Activated B cell treated with CpG ODN at 0.5 μM for 24 hours (primary cell): ENCODE measurements at regions of chr1 and their contacts with region 1.

Region 1: GRCh38 chr1:116504308-116505156 is 66.3 kb downstream of the CD58 start:
- DNase-seq: peak; percentile 64
- ATAC-seq: peak; percentile 95
- H3K4me3 Mint-ChIP-seq: peak overlapping the region; percentile 53
- H3K27ac Mint-ChIP-seq: peak overlapping the region; percentile 83
- H3K4me1 Mint-ChIP-seq: peaks cover 63% of the 10 kb centered on the region
- H3K27me3 Mint-ChIP-seq: no peaks in the 10 kb centered on the region
- CTCF ChIP-seq: no peak

Region 2: DNA sequence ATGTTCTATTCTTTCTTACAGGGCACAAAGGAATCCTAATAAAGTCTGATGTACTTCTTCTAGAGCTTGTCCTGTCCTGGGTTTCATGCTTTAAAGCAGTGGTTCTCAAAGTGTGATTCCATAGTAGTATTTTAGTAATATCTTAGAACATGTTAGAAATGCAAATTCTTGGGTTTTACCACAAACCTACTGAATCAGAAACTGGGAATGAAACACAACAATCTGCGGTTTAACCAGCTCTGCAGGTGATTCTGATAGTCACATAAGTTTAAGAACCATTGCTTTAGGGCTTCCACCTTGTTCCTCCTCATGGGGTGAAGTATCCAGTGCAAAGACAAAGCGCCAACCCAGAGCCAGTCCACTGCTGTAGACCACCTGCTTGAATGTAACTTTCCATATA is 1207.6 kb before region 1 on chr1:
- CTCF ChIA-PET with region 1: no interaction called
- POLR2A ChIA-PET with region 1: no interaction called
- intact Hi-C with region 1: no loop called
- DNase-seq: no peak
- ATAC-seq: no peak
- H3K4me3 Mint-ChIP-seq: no peak overlapping the region
- H3K27ac Mint-ChIP-seq: no peak overlapping the region
- H3K4me1 Mint-ChIP-seq: no peaks in the 10 kb centered on the region
- H3K27me3 Mint-ChIP-seq: peaks cover 2% of the 10 kb centered on the region
- CTCF ChIP-seq: no peak

Region 3: DNA sequence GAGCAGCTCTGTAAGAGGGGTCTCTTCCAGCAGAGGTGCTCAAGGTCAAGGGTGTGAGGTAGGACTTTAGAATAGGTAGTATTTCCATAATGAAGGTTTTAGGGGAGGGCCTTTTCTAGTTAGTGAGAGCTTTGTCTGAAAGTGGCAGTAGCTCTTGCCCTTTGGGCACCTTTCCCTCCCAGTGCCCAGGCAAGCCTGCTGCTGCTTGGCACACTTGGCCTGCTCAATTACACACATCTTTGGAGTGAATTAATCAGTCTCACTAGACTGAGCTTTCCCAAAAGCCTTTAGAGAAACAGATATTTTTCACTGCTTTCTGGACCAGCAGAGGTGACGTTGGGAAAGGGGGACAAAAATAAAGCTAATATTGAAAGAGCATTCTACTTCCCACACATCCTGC is 345.4 kb before region 1 on chr1:
- CTCF ChIA-PET with region 1: interaction called, 8 read pairs
- POLR2A ChIA-PET with region 1: interaction called, 11 read pairs
- intact Hi-C with region 1: no loop called
- DNase-seq: no peak
- ATAC-seq: no peak
- H3K4me3 Mint-ChIP-seq: no peak overlapping the region
- H3K27ac Mint-ChIP-seq: no peak overlapping the region
- H3K4me1 Mint-ChIP-seq: no peaks in the 10 kb centered on the region
- H3K27me3 Mint-ChIP-seq: peaks cover 3% of the 10 kb centered on the region
- CTCF ChIP-seq: no peak

Region 4: DNA sequence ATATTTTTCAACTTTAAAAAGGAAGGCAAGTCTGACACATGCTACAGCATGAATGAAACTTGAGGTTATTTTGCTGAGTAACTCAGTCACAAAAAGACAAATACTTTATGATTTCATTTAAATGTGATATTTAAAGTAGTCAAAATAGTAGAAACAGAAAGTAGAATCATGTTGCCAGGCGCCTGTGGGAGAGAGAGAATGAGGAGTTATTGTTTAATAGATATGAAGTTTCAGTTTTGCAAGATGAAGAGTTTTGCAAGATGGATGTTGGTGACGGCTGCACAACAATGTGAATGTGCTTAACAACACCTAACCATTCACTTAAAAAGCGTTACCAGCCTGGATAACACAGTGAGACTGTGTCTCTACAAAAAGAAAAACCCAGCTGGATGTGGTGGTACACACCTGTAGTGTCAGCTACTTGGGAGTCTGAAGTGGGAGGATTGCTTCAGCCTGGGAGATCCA is 152.2 kb before region 1 on chr1:
- CTCF ChIA-PET with region 1: no interaction called
- POLR2A ChIA-PET with region 1: no interaction called
- intact Hi-C with region 1: no loop called
- DNase-seq: no peak
- ATAC-seq: no peak
- H3K4me3 Mint-ChIP-seq: no peak overlapping the region
- H3K27ac Mint-ChIP-seq: no peak overlapping the region
- H3K4me1 Mint-ChIP-seq: peaks cover 3% of the 10 kb centered on the region
- H3K27me3 Mint-ChIP-seq: peaks cover 13% of the 10 kb centered on the region
- CTCF ChIP-seq: no peak

Region 5: GRCh38 chr1:116435806-116436610 is 68.5 kb before region 1 on chr1:
- CTCF ChIA-PET with region 1: no interaction called
- POLR2A ChIA-PET with region 1: no interaction called
- intact Hi-C with region 1: loop called (anchors 5 kb)
- DNase-seq: no peak
- ATAC-seq: no peak
- H3K4me3 Mint-ChIP-seq: no peak overlapping the region
- H3K27ac Mint-ChIP-seq: no peak overlapping the region
- H3K4me1 Mint-ChIP-seq: no peaks in the 10 kb centered on the region
- H3K27me3 Mint-ChIP-seq: peaks cover 3% of the 10 kb centered on the region
- CTCF ChIP-seq: no peak

Region 6: DNA sequence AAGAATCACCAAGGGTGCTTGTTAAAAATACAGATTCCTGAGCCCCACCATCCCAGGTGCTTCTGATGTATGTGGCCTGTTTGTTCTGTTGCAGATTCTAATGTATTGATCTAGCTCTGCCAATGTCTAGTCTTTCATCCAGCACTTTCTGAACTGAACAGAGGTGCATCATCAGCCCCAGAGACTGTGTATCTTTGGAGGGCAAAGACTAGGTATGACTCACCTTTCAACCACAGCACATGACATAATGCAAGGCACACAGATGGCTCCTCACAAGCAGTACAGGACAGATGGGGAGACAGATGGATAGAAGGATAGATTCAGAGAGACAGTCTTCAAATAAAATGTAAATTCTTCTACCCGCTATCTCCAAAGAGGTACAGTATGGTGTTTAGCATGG is 34.0 kb after region 1 on chr1:
- CTCF ChIA-PET with region 1: interaction called, 6 read pairs
- POLR2A ChIA-PET with region 1: interaction called, 21 read pairs
- intact Hi-C with region 1: loop called (anchors 1 kb)
- DNase-seq: no peak
- ATAC-seq: peak; percentile 80
- H3K4me3 Mint-ChIP-seq: peak overlapping the region; percentile 20
- H3K27ac Mint-ChIP-seq: peak overlapping the region; percentile 86
- H3K4me1 Mint-ChIP-seq: peaks cover 66% of the 10 kb centered on the region
- H3K27me3 Mint-ChIP-seq: no peaks in the 10 kb centered on the region
- CTCF ChIP-seq: no peak

Region 7: DNA sequence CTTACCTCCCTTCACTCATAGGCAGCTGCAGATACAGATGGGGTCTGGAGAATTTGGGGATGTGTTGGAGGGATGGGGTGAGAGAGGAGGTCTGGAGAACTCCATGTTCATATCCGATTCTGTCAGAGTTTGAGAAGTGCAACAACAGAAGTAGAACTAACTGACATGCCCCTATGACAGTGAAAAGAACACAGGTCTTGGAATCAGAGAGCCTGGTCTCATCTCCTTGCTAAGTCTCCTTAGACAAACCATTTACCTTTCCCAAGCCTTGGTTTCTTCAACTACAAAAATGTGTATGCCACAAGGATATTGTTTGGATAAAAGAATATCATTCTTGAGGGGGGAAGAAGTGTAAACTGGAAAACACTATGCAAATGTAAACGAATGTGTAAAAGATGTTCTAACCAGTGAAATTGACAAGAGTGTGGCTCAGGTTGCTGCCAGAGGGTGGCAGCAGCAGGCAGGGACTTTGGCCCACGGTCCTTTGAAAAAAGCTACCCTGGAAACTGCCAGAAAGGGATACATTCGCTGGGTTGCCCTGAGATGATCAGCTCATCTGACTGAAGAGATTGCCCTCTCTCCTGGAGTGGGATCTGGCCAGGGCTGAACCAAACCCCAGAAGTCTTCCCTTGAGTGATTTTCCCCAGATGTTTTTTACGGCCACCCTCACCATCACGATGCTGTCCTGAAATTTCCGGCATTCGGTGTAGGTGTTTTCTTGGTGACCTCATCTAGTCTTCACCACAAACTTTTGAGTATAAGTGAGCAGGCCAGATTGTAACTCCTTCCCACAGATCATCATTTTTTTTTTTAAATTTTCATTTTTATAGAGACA is 232.7 kb after region 1 on chr1:
- CTCF ChIA-PET with region 1: no interaction called
- POLR2A ChIA-PET with region 1: no interaction called
- intact Hi-C with region 1: loop called (anchors 10 kb)
- DNase-seq: peak; percentile 34
- ATAC-seq: peak; percentile 70
- H3K4me3 Mint-ChIP-seq: peak overlapping the region; percentile 45
- H3K27ac Mint-ChIP-seq: peak overlapping the region; percentile 4
- H3K4me1 Mint-ChIP-seq: peaks cover 25% of the 10 kb centered on the region
- H3K27me3 Mint-ChIP-seq: no peaks in the 10 kb centered on the region
- CTCF ChIP-seq: peak; percentile 45